ENCODE measurements at regions of chr9 and their contacts with region 1.

Region 1: DNA sequence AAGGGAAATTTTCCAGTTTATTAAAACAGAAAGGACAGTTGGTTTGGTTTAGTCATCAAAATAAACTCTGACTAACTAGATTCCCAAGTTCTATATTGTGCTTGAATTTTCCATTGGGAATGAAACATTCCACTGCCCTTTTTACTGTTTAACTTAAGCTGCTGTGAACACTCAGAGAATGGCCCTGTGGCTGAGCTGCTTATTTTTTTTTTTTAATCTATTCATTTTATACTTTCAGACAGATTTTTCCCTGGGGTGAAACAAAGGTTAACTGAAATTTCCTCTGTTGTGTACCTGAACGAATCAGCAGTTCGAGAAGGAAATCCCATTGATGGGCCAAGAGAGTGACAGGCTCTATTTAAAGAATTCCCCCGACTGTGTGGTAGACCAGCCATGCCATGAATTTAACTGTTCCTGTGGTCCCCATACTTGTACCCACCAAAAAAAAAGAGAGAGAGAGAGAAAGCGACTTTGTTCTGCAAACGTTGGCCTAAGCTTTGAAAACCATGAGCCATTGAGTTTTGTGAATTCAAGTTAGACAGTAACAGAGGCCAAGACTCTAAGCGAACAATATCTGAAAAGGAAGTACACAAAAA is 138.7 kb upstream of the GRHPR start:
- DNase-seq: no peak
- H3K4me3 ChIP-seq: no peak overlapping the region
- H3K27ac ChIP-seq: no peak overlapping the region
- H3K4me1 ChIP-seq: peaks cover 0 to 12% (median 3%) of the 10 kb centered on the region in 4 donors
- H3K27me3 ChIP-seq: no peaks in the 10 kb centered on the region
- CTCF ChIP-seq: no peak
- EP300 ChIP-seq: no peak
- POLR2A ChIP-seq: no peak

Region 2: DNA sequence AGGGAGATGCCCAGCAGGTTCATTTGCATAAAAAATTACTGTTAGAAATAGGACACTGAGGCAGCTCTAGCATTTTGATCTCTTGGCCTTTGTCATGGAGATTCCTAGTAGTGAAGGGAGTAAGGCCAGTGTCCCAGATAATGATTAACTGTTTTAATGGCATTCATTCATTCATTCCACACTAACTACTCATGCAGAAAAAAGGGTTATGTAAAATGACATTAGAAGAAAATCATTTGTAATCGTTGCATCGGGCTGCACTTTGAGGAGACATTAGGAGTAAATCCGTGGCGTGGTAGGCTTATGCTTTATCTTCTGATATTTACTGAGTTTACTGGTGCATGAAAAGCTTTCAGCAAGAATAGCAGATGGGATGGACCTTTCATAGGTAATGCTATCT is 56.1 kb after region 1 on chr9:
- in situ Hi-C with region 1: no loop called
- intact Hi-C with region 1: loop called (anchors 10 kb)
- DNase-seq: no peak
- H3K4me3 ChIP-seq: no peak overlapping the region
- H3K27ac ChIP-seq: no peak overlapping the region
- H3K4me1 ChIP-seq: peaks cover 0 to 24% (median 6%) of the 10 kb centered on the region in 4 donors
- H3K27me3 ChIP-seq: no peaks in the 10 kb centered on the region
- CTCF ChIP-seq: no peak
- EP300 ChIP-seq: no peak
- POLR2A ChIP-seq: no peak